Psoas muscle (tissue), 8 donors: ENCODE measurements at regions of chrX and their contacts with region 1.

Region 1: GRCh38 chrX:130028196-130028595 is 45.8 kb downstream of the BCORL1 start:
- DNase-seq: peak; percentile 44 to 77
- ATAC-seq: peak in 2 of 4 donors; percentile 58 to 67
- H3K4me3 ChIP-seq: no peak overlapping the region
- H3K27ac ChIP-seq: no peak overlapping the region
- H3K4me1 ChIP-seq: no peaks in the 10 kb centered on the region
- H3K27me3 ChIP-seq: no peaks in the 10 kb centered on the region
- CTCF ChIP-seq: peak; percentile 74

Region 2: GRCh38 chrX:129925305-129926092 is 102.7 kb before region 1 on chrX:
- intact Hi-C with region 1: loop called (anchors 2 to 5 kb)
- DNase-seq: peak; percentile 43 to 70
- ATAC-seq: peak; percentile 68 to 93 (median 78)
- H3K4me3 ChIP-seq: no peak overlapping the region
- H3K27ac ChIP-seq: no peak overlapping the region
- H3K4me1 ChIP-seq: no peaks in the 10 kb centered on the region
- H3K27me3 ChIP-seq: no peaks in the 10 kb centered on the region
- CTCF ChIP-seq: peak; percentile 61